Left colon (tissue), 2 donors: ENCODE measurements at regions of chr6 and their contacts with region 1.

Region 1: GRCh38 chr6:104525677-104526312 is 333.9 kb downstream of the HACE1 start:
- DNase-seq: peak; percentile 47 to 60
- ATAC-seq: peak; percentile 93

Region 2: GRCh38 chr6:104771258-104771832 is 245.6 kb after region 1 on chr6:
- intact Hi-C with region 1: loop called in 1 of 2 experiments (anchors 5 kb)
- DNase-seq: no peak
- ATAC-seq: peak; percentile 60